MCF 10A (cell line): ENCODE measurements at regions of chr12 and their contacts with region 1.

Region 1: DNA sequence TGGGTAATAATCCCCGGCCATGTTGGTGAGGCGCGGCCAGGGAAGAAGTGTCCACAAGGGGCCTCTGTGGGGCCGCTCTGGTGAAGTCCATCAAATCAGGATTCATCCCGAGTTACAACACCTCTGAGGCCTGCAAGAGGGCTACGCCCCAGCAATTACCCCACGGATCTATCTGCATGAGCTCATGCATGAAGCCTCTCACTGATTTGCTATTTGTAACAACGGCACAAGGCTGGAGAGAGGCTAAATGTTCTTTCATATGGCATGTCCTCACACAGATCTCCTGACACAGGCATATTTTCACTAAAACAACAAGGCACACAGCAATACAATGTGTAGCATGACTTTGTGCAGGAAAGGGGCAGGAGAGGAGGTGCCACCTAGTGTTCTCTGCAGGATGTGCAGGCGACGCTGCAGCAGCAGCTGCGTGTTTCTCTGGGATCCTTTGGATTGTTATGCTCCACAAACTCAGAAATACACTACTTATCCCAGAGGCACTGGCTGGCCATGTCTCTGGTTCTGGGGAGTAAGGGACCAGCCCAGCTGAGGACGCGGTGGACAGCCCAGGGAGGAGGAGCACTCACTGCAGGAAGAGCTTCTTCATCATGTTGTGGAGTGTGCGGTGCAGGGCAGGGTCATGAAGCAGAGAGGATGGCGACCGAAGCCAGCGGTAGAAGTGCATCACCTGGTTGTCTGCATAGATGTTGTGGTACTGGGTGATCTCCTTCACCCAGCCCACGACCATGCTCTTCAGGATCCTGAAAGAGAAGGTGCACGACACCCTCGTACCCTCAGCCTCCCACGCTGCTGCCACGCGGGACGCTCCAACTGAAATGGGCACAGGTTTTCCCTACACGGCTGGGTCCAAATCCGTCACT is 20.2 kb downstream of the P2RX2 start:
- DNase-seq: peak; percentile 29
- H3K4me3 Mint-ChIP-seq: no peak overlapping the region
- H3K27ac Mint-ChIP-seq: no peak overlapping the region
- H3K4me1 Mint-ChIP-seq: no peaks in the 10 kb centered on the region
- H3K27me3 Mint-ChIP-seq: no peaks in the 10 kb centered on the region
- CTCF ChIP-seq: peak; percentile 76

Region 2: DNA sequence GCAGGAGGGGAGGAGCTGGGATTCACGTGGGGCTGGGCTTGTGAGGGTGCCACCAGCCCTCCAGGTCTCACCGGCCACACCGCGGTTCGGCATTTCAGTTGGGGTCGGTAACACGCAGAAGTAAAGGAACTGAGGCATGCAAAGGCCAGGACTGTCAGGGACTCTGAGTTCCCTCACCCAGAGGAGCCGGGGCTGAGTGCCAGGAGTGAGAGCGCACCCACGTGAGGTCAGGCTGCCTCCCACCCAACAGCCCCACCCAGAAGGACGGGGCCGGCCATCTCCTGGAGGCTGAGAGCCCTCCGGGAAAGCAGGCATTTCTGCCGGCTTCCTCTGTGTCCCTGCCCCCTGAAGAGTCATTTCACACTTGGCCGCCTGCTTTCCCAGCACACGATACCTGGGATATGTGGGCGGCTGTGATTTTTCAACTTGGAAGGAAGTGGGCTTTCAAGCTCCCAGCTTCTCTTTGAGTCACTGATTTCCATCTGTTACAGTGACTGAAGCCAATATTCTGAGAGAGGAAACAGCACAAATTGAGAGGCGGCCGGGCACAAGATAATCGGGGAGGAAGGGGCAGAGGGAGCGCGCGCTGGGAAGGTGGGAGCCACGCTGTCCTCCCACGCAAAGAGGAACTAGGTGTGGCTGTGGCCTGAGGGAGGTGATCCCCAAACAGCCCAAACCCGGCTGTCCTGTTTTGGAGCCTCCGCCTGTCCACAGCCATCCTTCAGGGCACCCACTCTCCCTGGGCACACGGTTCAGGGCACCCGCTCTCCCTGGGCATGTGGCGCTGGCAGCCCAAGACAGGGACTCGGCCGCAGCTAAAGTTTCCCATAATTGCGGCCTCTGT is 328.4 kb before region 1 on chr12:
- CTCF ChIA-PET with region 1: no interaction called
- POLR2A ChIA-PET with region 1: no interaction called
- intact Hi-C with region 1: no loop called
- DNase-seq: no peak
- H3K4me3 Mint-ChIP-seq: no peak overlapping the region
- H3K27ac Mint-ChIP-seq: no peak overlapping the region
- H3K4me1 Mint-ChIP-seq: no peaks in the 10 kb centered on the region
- H3K27me3 Mint-ChIP-seq: peaks cover 17% of the 10 kb centered on the region
- CTCF ChIP-seq: no peak

Region 3: GRCh38 chr12:132600048-132601032 is 38.4 kb before region 1 on chr12:
- CTCF ChIA-PET with region 1: interaction called, 3 read pairs
- POLR2A ChIA-PET with region 1: no interaction called
- intact Hi-C with region 1: loop called (anchors 1 kb)
- DNase-seq: peak; percentile 58
- H3K4me3 Mint-ChIP-seq: peak overlapping the region; percentile 68
- H3K27ac Mint-ChIP-seq: no peak overlapping the region
- H3K4me1 Mint-ChIP-seq: no peaks in the 10 kb centered on the region
- H3K27me3 Mint-ChIP-seq: peaks cover 89% of the 10 kb centered on the region
- CTCF ChIP-seq: peak; percentile 57

Region 4: DNA sequence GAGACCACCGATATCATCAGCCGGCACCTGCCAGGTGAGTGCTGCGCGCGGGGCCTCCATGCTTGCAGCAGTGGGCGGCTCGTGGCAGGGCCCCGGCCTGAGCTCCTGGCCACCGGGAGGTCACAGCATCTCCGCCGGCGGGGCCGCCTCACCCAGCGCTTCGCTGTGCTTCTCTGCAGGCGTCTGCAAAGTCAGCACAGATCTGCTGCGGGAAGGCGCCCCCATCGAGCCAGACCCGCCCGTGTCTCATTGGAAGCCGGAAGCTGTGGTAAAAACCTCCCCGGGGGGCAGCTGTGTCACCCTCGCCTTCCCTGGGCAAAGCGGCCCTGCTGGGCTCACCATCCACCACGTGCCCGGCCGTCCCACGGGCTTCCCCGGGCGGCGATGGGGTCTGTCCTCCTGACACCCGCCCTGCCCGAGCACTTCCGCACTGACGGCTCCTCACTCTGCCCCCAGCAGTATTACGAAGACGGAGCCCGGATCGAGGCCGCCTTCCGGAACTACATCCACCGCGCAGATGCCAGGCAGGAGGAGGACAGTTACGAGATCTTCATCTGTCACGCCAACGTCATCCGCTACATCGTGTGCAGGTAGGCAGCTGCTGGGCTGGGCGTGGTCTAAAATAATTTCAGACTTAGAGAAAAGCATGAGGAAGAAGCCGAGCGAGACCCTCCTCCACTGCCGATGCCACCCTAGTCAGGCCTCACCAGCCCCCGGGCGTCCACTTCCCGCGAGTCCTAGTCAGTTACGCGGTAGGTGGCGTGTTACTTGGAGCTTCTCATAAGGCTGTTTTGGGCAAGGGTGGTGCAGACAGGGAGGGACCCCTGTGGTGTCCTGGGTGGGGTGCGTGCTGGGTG is 79.0 kb after region 1 on chr12:
- CTCF ChIA-PET with region 1: no interaction called
- POLR2A ChIA-PET with region 1: no interaction called
- intact Hi-C with region 1: no loop called
- DNase-seq: no peak
- H3K4me3 Mint-ChIP-seq: no peak overlapping the region
- H3K27ac Mint-ChIP-seq: no peak overlapping the region
- H3K4me1 Mint-ChIP-seq: no peaks in the 10 kb centered on the region
- H3K27me3 Mint-ChIP-seq: no peaks in the 10 kb centered on the region
- CTCF ChIP-seq: no peak